CD8-positive, alpha-beta T cell (primary cell): ENCODE measurements at regions of chr10 and their contacts with region 1.

Region 1: DNA sequence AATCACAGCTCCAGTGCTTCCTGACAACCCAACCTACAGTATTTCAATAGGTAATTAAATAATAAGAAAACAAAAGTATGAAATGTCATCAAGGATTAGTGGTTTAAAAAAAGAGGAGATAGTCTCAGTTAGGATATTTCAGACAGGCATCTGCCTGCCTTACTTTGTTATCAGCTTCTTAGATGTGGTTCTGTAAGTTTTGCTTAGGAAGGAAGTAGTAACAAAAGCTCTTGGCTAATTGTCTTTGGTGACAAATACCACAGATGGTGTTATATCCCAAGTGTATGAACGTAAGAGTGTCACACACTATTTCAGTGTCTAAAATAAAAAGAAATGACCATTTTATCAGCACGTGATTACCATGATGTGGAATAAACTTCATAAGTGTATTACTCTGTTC is 9.8 kb upstream of the ACTA2 start:
- DNase-seq: peak in 2 of 9 experiments; percentile 23 to 48
- ATAC-seq: peak; percentile 64
- H3K4me3 ChIP-seq: no peak overlapping the region
- H3K4me3 Mint-ChIP-seq: peak overlapping the region; percentile 42
- H3K27ac ChIP-seq: no peak overlapping the region
- H3K27ac Mint-ChIP-seq: peak overlapping the region; percentile 42
- H3K4me1 ChIP-seq: peaks cover 9% of the 10 kb centered on the region
- H3K4me1 Mint-ChIP-seq: peaks cover 27% of the 10 kb centered on the region
- H3K27me3 ChIP-seq: no peaks in the 10 kb centered on the region
- H3K27me3 Mint-ChIP-seq: no peaks in the 10 kb centered on the region
- CTCF ChIP-seq: no peak

Region 2: DNA sequence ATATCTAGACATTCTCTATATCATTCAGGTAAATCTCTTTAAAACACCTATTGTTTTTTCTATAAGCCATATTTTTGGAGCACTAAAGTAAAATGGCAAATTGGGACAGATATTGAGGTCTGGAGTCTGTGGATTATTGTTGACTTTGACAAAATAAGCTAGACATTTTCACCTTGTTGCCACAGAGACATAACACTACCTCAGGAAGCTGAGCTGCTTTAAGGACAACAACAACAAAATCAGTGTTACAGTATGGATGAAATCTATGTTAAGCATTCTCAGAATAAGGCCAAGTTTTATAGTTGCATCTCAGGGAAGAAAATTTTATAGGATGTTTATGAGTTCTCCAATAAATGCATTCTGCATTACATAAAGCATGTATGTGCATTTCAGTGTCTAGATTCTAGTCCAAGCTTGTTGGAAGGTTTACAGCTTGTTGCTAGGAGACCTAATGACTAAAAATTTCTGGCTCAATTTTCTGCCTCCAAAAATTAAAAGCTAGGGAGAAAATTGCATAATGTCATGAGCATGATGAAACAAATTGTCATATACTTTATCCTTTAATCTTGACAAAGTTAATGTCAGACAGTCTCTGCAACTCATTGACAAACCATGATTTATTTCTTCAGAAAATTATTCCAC is 141.5 kb before region 1 on chr10:
- CTCF ChIA-PET with region 1: no interaction called
- POLR2A ChIA-PET with region 1: no interaction called
- intact Hi-C with region 1: no loop called
- DNase-seq: no peak
- ATAC-seq: no peak
- H3K4me3 ChIP-seq: no peak overlapping the region
- H3K4me3 Mint-ChIP-seq: no peak overlapping the region
- H3K27ac ChIP-seq: no peak overlapping the region
- H3K27ac Mint-ChIP-seq: no peak overlapping the region
- H3K4me1 ChIP-seq: peaks cover 15% of the 10 kb centered on the region
- H3K4me1 Mint-ChIP-seq: peaks cover 43% of the 10 kb centered on the region
- H3K27me3 ChIP-seq: no peaks in the 10 kb centered on the region
- H3K27me3 Mint-ChIP-seq: no peaks in the 10 kb centered on the region
- CTCF ChIP-seq: no peak

Region 3: DNA sequence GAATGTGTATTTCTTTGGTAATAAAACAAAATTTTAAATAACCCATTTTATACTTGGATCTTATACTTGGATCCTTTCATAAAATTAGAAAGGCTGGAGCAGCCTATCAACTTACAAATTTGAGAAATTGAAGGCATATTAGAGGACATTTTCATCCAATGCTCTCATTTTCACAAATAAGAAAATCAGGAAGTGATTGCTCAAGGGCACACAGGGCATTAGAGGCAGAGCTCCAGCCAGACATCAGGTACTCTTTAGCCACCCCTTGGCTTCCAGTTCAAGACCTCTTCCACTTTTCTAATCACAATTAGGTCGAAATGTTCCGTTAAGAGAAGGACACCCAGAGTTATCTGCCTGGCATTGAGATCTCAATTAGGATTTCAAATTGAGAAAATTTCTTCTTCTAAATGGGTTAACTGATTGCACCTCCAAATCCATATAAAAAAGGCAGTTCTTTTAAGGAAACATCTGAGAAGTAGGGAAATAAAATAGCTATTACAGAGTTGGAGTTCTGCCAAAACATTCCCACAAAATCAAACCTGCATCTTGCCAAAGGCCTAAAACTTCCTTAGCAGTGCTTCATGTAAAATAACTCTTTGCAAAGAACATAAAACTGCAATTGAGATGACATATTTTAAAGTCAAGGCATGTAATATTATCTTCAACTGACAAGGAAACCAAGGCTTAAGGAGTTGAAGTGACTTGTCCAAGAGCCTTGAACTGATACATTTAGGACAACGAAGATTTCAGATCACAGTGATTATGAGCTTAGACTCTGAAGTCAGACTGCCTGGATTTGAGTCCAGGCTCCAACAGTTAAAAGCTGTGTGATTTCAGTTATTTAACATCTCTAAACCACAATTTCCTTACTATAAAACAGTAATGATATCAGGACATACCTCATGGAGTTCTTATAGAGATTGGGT is 12.2 kb before region 1 on chr10:
- CTCF ChIA-PET with region 1: no interaction called
- POLR2A ChIA-PET with region 1: interaction called, 3 read pairs
- intact Hi-C with region 1: loop called in 1 of 2 experiments (anchors 1 kb)
- DNase-seq: no peak
- ATAC-seq: no peak
- H3K4me3 ChIP-seq: no peak overlapping the region
- H3K4me3 Mint-ChIP-seq: no peak overlapping the region
- H3K27ac ChIP-seq: no peak overlapping the region
- H3K27ac Mint-ChIP-seq: no peak overlapping the region
- H3K4me1 ChIP-seq: no peaks in the 10 kb centered on the region
- H3K4me1 Mint-ChIP-seq: no peaks in the 10 kb centered on the region
- H3K27me3 ChIP-seq: no peaks in the 10 kb centered on the region
- H3K27me3 Mint-ChIP-seq: no peaks in the 10 kb centered on the region
- CTCF ChIP-seq: no peak

Region 4: DNA sequence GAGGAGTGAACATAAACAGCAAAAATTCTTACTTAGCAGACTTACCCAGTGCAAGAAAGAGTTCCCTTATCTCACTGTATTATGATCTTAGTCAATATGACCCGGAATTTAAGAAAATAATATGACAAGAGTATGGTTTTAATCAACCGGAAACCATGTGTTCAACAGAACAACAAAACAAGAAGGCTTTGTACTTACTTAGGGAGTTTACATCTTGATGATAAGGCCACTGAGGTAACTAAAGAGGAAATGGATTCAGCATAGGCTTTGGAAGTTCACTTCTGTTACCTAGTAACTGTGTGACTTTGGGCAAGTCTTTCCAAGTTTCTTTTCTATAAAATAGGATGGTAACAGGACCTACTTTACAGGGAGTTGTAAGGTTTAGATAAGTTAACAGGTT is 20.9 kb after region 1 on chr10:
- CTCF ChIA-PET with region 1: no interaction called
- POLR2A ChIA-PET with region 1: no interaction called
- intact Hi-C with region 1: no loop called
- DNase-seq: no peak
- ATAC-seq: no peak
- H3K4me3 ChIP-seq: no peak overlapping the region
- H3K4me3 Mint-ChIP-seq: no peak overlapping the region
- H3K27ac ChIP-seq: no peak overlapping the region
- H3K27ac Mint-ChIP-seq: no peak overlapping the region
- H3K4me1 ChIP-seq: peaks cover 17% of the 10 kb centered on the region
- H3K4me1 Mint-ChIP-seq: peaks cover 19% of the 10 kb centered on the region
- H3K27me3 ChIP-seq: no peaks in the 10 kb centered on the region
- H3K27me3 Mint-ChIP-seq: no peaks in the 10 kb centered on the region
- CTCF ChIP-seq: no peak

Region 5: GRCh38 chr10:89001024-89001728 is 38.8 kb after region 1 on chr10:
- CTCF ChIA-PET with region 1: no interaction called
- POLR2A ChIA-PET with region 1: no interaction called
- intact Hi-C with region 1: loop called in 1 of 2 experiments (anchors 5 kb)
- DNase-seq: peak in 4 of 9 experiments; percentile 27 to 64 (median 37)
- ATAC-seq: peak; percentile 56
- H3K4me3 ChIP-seq: peak overlapping the region in 1 of 2 experiments; percentile 38
- H3K4me3 Mint-ChIP-seq: peak overlapping the region; percentile 69
- H3K27ac ChIP-seq: peak overlapping the region; percentile 22 to 60
- H3K27ac Mint-ChIP-seq: peak overlapping the region; percentile 60
- H3K4me1 ChIP-seq: peaks cover 34% of the 10 kb centered on the region
- H3K4me1 Mint-ChIP-seq: peaks cover 55% of the 10 kb centered on the region
- H3K27me3 ChIP-seq: no peaks in the 10 kb centered on the region
- H3K27me3 Mint-ChIP-seq: no peaks in the 10 kb centered on the region
- CTCF ChIP-seq: no peak